CD8-positive, alpha-beta memory T cell (primary cell): ENCODE measurements at regions of chr22 and their contacts with region 1.

Region 1: GRCh38 chr22:44684506-44685383 is 17.3 kb upstream of the PRR5 start:
- DNase-seq: peak; percentile 75 to 89 (median 80)
- H3K4me3 ChIP-seq: no peak overlapping the region
- H3K4me3 Mint-ChIP-seq: peak overlapping the region in 6 of 7 donors; percentile 68 to 83 (median 74)
- H3K27ac ChIP-seq: peak overlapping the region; percentile 24
- H3K27ac Mint-ChIP-seq: peak overlapping the region; percentile 31 to 95 (median 93)
- H3K4me1 ChIP-seq: peaks cover 38% of the 10 kb centered on the region
- H3K4me1 Mint-ChIP-seq: peaks cover 48 to 64% (median 56%) of the 10 kb centered on the region in 3 donors
- H3K27me3 ChIP-seq: no peaks in the 10 kb centered on the region
- H3K27me3 Mint-ChIP-seq: no peaks in the 10 kb centered on the region

Region 2: GRCh38 chr22:44561139-44561840 is 123.5 kb before region 1 on chr22:
- CTCF ChIA-PET with region 1: no interaction called
- POLR2A ChIA-PET with region 1: no interaction called
- DNase-seq: no peak
- H3K4me3 ChIP-seq: no peak overlapping the region
- H3K4me3 Mint-ChIP-seq: no peak overlapping the region
- H3K27ac ChIP-seq: no peak overlapping the region
- H3K27ac Mint-ChIP-seq: no peak overlapping the region
- H3K4me1 ChIP-seq: no peaks in the 10 kb centered on the region
- H3K4me1 Mint-ChIP-seq: no peaks in the 10 kb centered on the region
- H3K27me3 ChIP-seq: peaks cover under 1% of the 10 kb centered on the region
- H3K27me3 Mint-ChIP-seq: peaks cover 7 to 19% of the 10 kb centered on the region in 2 donors

Region 3: DNA sequence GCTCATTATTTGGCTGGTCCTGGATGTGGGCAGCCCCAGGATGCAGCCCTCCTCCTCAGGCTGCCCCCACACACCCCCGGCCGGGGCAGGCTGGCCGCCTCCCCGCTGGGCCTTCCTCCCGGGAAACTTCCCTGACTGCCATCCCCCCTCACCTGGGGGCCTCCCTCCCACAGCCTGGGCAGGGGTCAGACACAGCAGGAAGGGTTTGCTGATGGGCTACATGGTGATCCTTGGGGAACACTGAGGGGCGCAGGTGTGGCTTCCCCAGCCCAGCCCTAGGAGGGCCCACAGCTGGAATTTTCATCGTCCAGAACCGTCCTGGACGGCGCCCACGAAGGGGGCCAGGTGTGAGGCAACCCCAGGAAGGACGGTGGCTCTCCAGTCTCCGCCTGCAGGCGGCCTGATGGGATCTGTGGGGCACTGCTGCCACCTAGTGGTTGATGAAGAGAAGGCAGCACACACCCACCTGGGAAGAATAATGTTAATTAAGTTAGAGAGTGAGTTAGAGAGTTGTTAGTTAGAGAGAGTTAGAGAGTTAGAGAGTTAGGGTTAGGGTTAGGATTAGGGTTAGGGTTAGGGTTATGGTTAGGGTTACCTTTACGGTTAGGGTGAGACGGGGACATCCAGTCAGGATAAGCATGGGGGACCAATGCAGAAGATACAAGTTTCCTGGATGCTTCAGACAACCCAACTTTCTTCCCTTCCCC is 58.6 kb before region 1 on chr22:
- CTCF ChIA-PET with region 1: interaction called, 10 read pairs
- POLR2A ChIA-PET with region 1: no interaction called
- DNase-seq: peak; percentile 68 to 86 (median 72)
- H3K4me3 ChIP-seq: no peak overlapping the region
- H3K4me3 Mint-ChIP-seq: peak overlapping the region in 1 of 7 donors; percentile 38
- H3K27ac ChIP-seq: no peak overlapping the region
- H3K27ac Mint-ChIP-seq: peak overlapping the region in 6 of 8 donors; percentile 3 to 48 (median 16)
- H3K4me1 ChIP-seq: peaks cover 3% of the 10 kb centered on the region
- H3K4me1 Mint-ChIP-seq: peaks cover 4 to 19% (median 6%) of the 10 kb centered on the region in 3 donors
- H3K27me3 ChIP-seq: no peaks in the 10 kb centered on the region
- H3K27me3 Mint-ChIP-seq: peaks cover 0 to 5% of the 10 kb centered on the region in 2 donors

Region 4: DNA sequence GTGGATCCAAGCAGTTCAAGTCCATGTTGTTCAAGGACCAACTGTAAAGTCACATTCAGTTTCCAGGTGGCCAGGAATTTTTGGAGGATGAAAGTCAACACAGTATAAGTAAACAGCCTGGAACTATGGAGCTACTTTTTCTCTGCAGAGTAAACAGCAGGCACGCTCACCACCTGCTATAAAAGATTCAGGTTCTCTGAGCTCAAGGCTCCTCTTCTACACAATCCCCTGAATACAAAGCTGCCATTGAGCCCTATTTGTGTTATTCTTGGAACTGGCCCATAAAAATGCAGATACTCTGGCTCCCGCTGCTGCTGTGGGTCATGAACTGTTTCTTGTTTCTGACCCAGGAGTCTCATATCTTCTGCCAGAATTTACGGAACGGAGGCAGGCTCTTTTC is 39.7 kb before region 1 on chr22:
- CTCF ChIA-PET with region 1: interaction called, 16 read pairs
- POLR2A ChIA-PET with region 1: no interaction called
- DNase-seq: no peak
- H3K4me3 ChIP-seq: no peak overlapping the region
- H3K4me3 Mint-ChIP-seq: no peak overlapping the region
- H3K27ac ChIP-seq: no peak overlapping the region
- H3K27ac Mint-ChIP-seq: peak overlapping the region in 1 of 8 donors; percentile 47
- H3K4me1 ChIP-seq: no peaks in the 10 kb centered on the region
- H3K4me1 Mint-ChIP-seq: no peaks in the 10 kb centered on the region
- H3K27me3 ChIP-seq: no peaks in the 10 kb centered on the region
- H3K27me3 Mint-ChIP-seq: peaks cover 0 to 1% of the 10 kb centered on the region in 2 donors

Region 5: DNA sequence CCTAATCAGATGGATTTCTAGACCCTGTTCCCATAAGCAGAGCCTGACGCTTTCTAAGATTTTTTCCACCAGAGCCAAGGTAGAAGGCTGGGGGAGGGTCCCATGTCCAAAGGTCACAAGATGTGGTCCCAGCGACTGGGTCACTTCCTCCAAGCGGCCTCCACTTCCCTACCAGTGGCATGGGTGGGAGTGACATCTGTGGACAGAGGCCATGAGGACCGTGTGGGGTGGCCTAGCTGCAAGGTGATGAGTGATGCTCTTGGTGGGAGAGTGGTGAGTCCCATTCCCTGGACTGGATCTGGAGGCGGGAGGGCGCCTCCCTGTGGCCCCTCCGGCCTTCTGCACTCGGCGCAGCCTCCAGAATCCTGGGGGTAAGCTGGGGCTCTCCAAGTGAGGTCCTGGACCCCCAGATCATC is 15.2 kb before region 1 on chr22:
- CTCF ChIA-PET with region 1: interaction called, 46 read pairs
- POLR2A ChIA-PET with region 1: interaction called, 7 read pairs
- DNase-seq: no peak
- H3K4me3 ChIP-seq: peak overlapping the region; percentile 70
- H3K4me3 Mint-ChIP-seq: peak overlapping the region; percentile 70 to 90 (median 77)
- H3K27ac ChIP-seq: peak overlapping the region; percentile 15
- H3K27ac Mint-ChIP-seq: peak overlapping the region; percentile 41 to 84 (median 66)
- H3K4me1 ChIP-seq: peaks cover 72% of the 10 kb centered on the region
- H3K4me1 Mint-ChIP-seq: peaks cover 61 to 80% (median 65%) of the 10 kb centered on the region in 3 donors
- H3K27me3 ChIP-seq: no peaks in the 10 kb centered on the region
- H3K27me3 Mint-ChIP-seq: no peaks in the 10 kb centered on the region